HCT116 (cell line): ENCODE measurements at regions of chr14 and their contacts with region 1.

Region 1: DNA sequence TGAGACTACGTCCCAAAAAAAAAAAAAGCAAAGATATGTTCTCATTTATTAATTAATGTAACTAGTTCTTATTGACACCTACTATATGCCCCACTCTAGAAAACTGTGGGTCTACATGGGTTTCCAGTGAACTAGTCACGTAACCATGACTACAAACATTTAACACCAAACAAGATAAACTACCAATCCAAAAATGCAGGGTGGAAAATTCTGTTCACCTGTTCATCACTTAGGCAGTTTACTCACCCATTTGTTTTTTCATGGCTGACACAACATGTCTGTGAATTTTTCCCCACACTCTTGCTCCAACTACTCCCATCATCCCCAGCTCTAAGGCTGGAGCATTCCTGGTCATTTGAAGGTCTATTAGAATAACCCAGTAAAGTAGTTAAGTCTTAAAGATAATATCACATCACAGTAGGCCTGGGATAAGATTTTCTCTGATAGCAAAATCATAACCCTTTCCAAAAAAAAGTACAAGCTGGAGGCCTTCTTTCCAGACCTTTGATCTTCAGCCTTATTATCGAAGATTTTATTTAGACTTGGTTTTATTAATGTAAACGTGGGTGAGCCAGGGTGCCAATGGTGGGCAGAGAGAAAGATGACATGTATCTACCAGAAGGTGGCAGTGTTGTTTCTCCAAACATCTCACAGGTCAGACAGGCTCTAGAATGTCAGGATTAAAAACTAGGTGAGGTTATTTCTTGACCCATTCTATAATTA is 61.6 kb upstream of the DAAM1 start:
- DNase-seq: peak; percentile 61
- ATAC-seq: peak; percentile 97
- H3K4me3 ChIP-seq: no peak overlapping the region
- H3K27ac ChIP-seq: no peak overlapping the region
- H3K4me1 ChIP-seq: no peaks in the 10 kb centered on the region
- H3K27me3 ChIP-seq: no peaks in the 10 kb centered on the region
- CTCF ChIP-seq: peak; percentile 61 to 86 (median 86)
- POLR2A ChIP-seq: no peak
- RAD21 ChIP-seq: peak; percentile 93

Region 2: DNA sequence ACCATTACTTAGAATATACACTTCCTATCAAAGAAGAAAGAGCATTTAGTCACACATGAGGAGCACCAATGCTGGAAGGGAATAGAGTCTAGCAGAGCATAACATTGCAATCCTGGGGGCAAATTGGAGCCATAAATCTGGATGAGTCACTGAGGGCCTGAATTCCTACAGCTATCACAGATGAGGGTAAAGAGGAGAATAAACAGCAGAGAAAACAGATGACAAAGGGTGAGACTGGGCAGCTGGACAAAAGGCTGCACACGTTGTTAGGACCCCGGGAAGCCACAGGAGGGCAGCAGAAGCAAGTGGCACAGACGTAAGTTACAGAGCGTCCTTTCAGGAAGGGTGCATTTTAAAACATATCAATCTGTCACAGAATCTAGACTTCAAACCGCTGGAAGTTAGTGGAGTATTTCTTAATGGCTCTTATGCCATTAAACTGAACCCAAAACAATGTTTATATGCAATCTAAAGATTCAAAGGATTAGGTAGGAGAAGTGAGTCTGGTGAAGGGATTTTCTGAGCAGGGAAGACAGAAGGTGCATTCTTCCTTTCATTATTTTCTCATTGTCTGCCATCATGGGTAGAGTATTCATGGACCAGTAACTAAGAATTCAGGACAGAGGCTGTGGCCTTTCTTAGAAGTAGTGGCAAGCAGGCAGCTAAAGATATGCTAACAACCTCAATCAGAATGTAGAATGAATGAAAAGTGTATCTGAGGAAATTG is 98.2 kb before region 1 on chr14:
- CTCF ChIA-PET with region 1: interaction called, 25 read pairs
- POLR2A ChIA-PET with region 1: no interaction called
- RAD21 ChIA-PET with region 1: interaction called in 1 of 2 experiments, 3 read pairs
- intact Hi-C with region 1: loop called (anchors 1 kb)
- DNase-seq: peak; percentile 68
- ATAC-seq: peak; percentile 98
- H3K4me3 ChIP-seq: peak overlapping the region in 1 of 2 experiments; percentile 14; a peak in 1 of 4 replicates
- H3K27ac ChIP-seq: no peak overlapping the region
- H3K4me1 ChIP-seq: peaks cover 0 to 9% of the 10 kb centered on the region in 2 experiments; a peak in 2 of 4 replicates
- H3K27me3 ChIP-seq: no peaks in the 10 kb centered on the region
- CTCF ChIP-seq: peak; percentile 80 to 93 (median 90)
- POLR2A ChIP-seq: no peak
- RAD21 ChIP-seq: peak; percentile 91

Region 3: GRCh38 chr14:59320763-59321640 is 194.1 kb after region 1 on chr14:
- CTCF ChIA-PET with region 1: no interaction called
- POLR2A ChIA-PET with region 1: no interaction called
- RAD21 ChIA-PET with region 1: no interaction called
- intact Hi-C with region 1: no loop called
- DNase-seq: no peak
- ATAC-seq: no peak
- H3K4me3 ChIP-seq: no peak overlapping the region
- H3K27ac ChIP-seq: no peak overlapping the region
- H3K4me1 ChIP-seq: no peaks in the 10 kb centered on the region
- H3K27me3 ChIP-seq: no peaks in the 10 kb centered on the region
- CTCF ChIP-seq: no peak
- POLR2A ChIP-seq: no peak
- RAD21 ChIP-seq: no peak

Region 4: GRCh38 chr14:59422069-59422881 is 295.4 kb after region 1 on chr14:
- CTCF ChIA-PET with region 1: interaction called, 5 read pairs
- POLR2A ChIA-PET with region 1: no interaction called
- RAD21 ChIA-PET with region 1: no interaction called
- intact Hi-C with region 1: loop called (anchors 1 kb)
- DNase-seq: no peak
- ATAC-seq: no peak; the same call in 1 of the 2 replicates
- H3K4me3 ChIP-seq: no peak overlapping the region
- H3K27ac ChIP-seq: no peak overlapping the region
- H3K4me1 ChIP-seq: no peaks in the 10 kb centered on the region
- H3K27me3 ChIP-seq: no peaks in the 10 kb centered on the region
- CTCF ChIP-seq: peak; percentile 4 to 37 (median 30); a peak in 2 of 6 replicates
- POLR2A ChIP-seq: no peak
- RAD21 ChIP-seq: peak; percentile 72

Region 5: GRCh38 chr14:59438195-59438647 is 311.4 kb after region 1 on chr14:
- CTCF ChIA-PET with region 1: interaction called, 24 read pairs
- POLR2A ChIA-PET with region 1: no interaction called
- RAD21 ChIA-PET with region 1: no interaction called
- intact Hi-C with region 1: no loop called
- DNase-seq: no peak
- ATAC-seq: no peak
- H3K4me3 ChIP-seq: no peak overlapping the region
- H3K27ac ChIP-seq: no peak overlapping the region
- H3K4me1 ChIP-seq: peaks cover 4 to 7% of the 10 kb centered on the region in 2 experiments; a peak in 1 of 4 replicates
- H3K27me3 ChIP-seq: no peaks in the 10 kb centered on the region
- CTCF ChIP-seq: no peak
- POLR2A ChIP-seq: no peak
- RAD21 ChIP-seq: no peak